ENCODE measurements at regions of chr9 and their contacts with region 1.

Region 1: GRCh38 chr9:13929013-13929412 is 384.9 kb downstream of the NFIB start:
- DNase-seq: no peak
- H3K4me3 ChIP-seq: no peak overlapping the region
- H3K27ac ChIP-seq: no peak overlapping the region
- H3K4me1 ChIP-seq: no peaks in the 10 kb centered on the region
- H3K27me3 ChIP-seq: no peaks in the 10 kb centered on the region
- CTCF ChIP-seq: no peak
- POLR2A ChIP-seq: no peak

Region 2: DNA sequence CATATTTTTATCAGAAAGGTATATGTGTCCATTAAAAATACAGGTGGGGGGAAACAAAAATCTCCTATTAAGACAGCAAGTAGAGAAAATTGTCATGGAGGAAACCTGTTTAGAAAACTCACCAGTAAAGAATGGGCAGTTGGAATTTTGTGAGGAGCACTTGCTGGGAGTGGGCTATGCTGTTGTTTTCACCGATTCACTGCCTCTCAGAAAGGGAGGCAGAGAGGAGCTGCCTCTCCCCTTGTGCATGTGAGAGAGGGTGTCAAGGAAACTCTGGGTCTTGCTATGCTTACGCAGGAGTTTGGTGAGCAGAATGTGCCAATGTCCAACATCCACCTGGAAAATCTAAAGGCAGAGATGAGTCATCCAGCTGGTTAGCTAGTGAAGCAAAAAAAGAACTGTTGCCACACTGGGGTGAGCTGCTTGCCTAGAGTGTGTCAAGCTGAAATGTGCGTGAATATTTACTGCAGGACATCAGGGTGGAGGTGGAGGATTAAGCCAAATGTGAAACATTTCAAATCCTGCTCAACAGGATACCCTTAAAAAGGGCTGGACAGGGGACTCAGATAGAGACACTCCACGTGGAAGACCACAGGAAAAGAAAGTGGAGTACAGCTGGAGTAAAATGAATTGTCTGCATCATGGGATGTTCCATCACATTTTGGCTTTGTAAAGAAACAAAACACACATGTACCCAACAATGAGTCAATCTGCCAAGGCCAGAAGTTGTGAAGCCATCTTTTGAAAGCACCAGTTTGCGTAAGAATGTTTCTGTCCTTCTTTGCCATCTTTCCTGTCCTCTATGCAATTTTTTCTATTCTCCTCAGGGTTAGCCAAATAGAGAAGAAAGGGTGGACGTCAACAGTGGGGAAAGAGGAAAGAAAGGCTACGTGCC is 199.8 kb before region 1 on chr9:
- intact Hi-C with region 1: no loop called
- DNase-seq: no peak
- H3K4me3 ChIP-seq: no peak overlapping the region
- H3K27ac ChIP-seq: no peak overlapping the region
- H3K4me1 ChIP-seq: no peaks in the 10 kb centered on the region
- H3K27me3 ChIP-seq: no peaks in the 10 kb centered on the region
- CTCF ChIP-seq: no peak
- POLR2A ChIP-seq: no peak

Region 3: GRCh38 chr9:13979941-13980318 is 50.9 kb after region 1 on chr9:
- intact Hi-C with region 1: loop called (anchors 10 kb)
- DNase-seq: no peak
- H3K4me3 ChIP-seq: no peak overlapping the region
- H3K27ac ChIP-seq: no peak overlapping the region
- H3K4me1 ChIP-seq: no peaks in the 10 kb centered on the region
- H3K27me3 ChIP-seq: no peaks in the 10 kb centered on the region
- CTCF ChIP-seq: no peak
- POLR2A ChIP-seq: no peak

Region 4: DNA sequence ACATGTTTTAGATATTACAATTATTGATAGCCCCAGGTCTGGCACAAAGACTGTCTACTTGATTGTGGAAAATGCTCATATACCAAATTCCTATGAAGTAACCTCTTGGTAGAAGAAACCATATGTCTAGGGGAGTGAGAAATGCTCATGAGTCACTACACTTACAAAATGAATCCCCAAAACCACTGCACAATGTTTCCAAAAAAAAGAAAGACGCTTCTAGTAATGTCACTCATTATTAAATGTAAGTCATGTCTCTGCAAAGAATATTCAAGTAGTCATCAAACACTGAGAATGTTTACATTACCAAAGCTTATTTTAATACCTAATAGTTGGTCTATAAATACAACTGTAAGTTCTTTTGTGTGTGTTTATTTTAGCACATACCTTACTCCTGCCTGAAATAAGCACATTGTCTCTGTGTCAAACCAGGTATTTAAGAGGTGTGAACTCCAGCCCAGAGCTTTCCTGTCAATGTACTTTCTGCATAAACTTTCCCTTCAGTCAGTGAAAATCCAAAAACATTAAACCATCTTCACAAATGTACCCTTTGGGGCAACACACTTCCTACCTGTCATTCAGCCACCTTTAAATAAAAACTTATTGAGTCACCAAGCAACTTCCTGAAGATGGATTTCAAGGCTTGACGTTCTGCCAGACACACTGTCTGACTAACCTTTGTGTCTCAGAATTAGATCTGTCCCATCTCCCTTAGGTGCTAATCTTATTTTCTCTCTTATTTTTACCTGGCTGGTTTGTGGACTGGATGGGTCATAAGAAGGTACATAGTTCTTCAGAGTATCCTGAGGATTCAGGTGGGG is 190.9 kb after region 1 on chr9:
- intact Hi-C with region 1: no loop called
- DNase-seq: no peak
- H3K4me3 ChIP-seq: no peak overlapping the region
- H3K27ac ChIP-seq: no peak overlapping the region
- H3K4me1 ChIP-seq: no peaks in the 10 kb centered on the region
- H3K27me3 ChIP-seq: no peaks in the 10 kb centered on the region
- CTCF ChIP-seq: no peak
- POLR2A ChIP-seq: no peak

Measured in prostate gland (tissue), 2 donors.